Sigmoid colon (tissue), 7 donors: ENCODE measurements at regions of chr11 and their contacts with region 1.

Region 1: GRCh38 chr11:15074206-15075161 is 1.1 kb downstream of the CALCB start:
- DNase-seq: peak; percentile 87
- H3K4me3 ChIP-seq: peak overlapping the region in 3 of 4 donors; percentile 20 to 46 (median 37)
- H3K27ac ChIP-seq: no peak overlapping the region
- H3K4me1 ChIP-seq: peaks cover 0 to 22% (median 20%) of the 10 kb centered on the region in 4 donors
- H3K27me3 ChIP-seq: peaks cover 11 to 48% (median 27%) of the 10 kb centered on the region in 3 donors
- CTCF ChIP-seq: peak; percentile 18 to 75 (median 60)
- EP300 ChIP-seq: no peak
- POLR2A ChIP-seq: no peak

Region 2: DNA sequence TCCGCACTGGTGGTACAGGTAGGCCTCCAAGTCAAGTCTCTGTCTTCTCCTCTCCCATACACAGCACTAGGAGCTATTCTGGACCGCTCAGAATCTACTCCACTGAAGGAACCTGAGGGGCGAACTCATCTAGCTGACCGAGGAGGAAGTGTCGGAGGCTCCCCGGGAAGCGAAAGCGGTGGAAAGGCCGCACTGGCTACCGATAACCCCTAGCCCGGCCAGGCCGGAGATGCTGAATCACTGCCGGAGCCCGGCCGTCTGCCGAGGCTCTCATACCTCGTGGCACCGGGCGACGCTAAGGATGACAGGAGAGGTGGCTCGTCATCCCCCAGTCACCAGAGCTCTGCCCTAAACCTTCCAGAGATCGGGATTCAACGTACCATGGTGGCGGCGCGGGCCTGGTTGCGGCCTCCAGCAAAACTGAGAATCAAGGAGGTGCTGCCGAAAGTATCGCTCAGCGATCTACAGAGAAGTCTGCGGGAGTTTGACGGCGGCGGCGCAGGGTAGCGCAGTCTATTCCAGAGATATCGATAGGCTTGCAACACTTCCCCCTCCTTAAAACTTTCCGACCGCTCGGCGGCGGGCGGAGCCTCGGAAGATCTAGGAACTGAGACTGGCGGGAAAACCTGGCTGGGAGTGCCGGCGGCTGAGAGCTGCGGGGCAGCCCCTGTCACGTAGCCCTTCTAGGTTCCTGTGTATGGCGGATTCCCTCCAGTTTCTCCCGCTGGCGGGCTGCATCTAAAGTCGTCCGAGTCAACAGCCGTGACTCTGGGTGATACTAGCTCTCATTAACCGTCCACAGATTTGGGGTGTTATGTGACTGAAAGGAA is 554.4 kb before region 1 on chr11 and contains the start of gene PSMA1:
- intact Hi-C with region 1: loop called (anchors 5 kb)
- DNase-seq: peak; percentile 97
- H3K4me3 ChIP-seq: peak within 1 kb of the TSS; percentile 74 to 87 (median 79)
- H3K27ac ChIP-seq: peak within 1 kb of the TSS; percentile 87 to 90 (median 88)
- H3K4me1 ChIP-seq: peaks cover 0 to 23% (median 19%) of the 10 kb centered on the region in 4 donors
- H3K27me3 ChIP-seq: no peaks in the 10 kb centered on the region
- CTCF ChIP-seq: peak; percentile 44 to 73 (median 60)
- EP300 ChIP-seq: peak in 1 of 4 donors; percentile 15
- POLR2A ChIP-seq: peak; percentile 37 to 58
- total RNA-seq, gene PSMA1: 109 to 137 (median 123) TPM

Region 3: GRCh38 chr11:14974515-14975251 is 99.8 kb before region 1 on chr11:
- intact Hi-C with region 1: loop called (anchors 5 kb)
- DNase-seq: no peak
- H3K4me3 ChIP-seq: peak overlapping the region in 2 of 4 donors; percentile 20
- H3K27ac ChIP-seq: no peak overlapping the region
- H3K4me1 ChIP-seq: peaks cover 0 to 32% (median 30%) of the 10 kb centered on the region in 4 donors
- H3K27me3 ChIP-seq: peaks cover 38 to 86% (median 65%) of the 10 kb centered on the region in 3 donors
- CTCF ChIP-seq: peak in 1 of 4 experiments; percentile 16
- EP300 ChIP-seq: no peak
- POLR2A ChIP-seq: no peak